H1 (cell line): ENCODE measurements at regions of chr1 and their contacts with region 1.

Region 1: GRCh38 chr1:162976628-162977027 is 92.5 kb upstream of the RGS4 start:
- DNase-seq: no peak
- H3K4me3 ChIP-seq: no peak overlapping the region
- H3K27ac ChIP-seq: no peak overlapping the region
- H3K4me1 ChIP-seq: no peaks in the 10 kb centered on the region
- H3K27me3 ChIP-seq: no peaks in the 10 kb centered on the region
- CTCF ChIP-seq: no peak
- EP300 ChIP-seq: no peak
- POLR2A ChIP-seq: no peak
- RAD21 ChIP-seq: no peak

Region 2: GRCh38 chr1:162942916-162943567 is 33.6 kb before region 1 on chr1:
- CTCF ChIA-PET with region 1: no interaction called
- POLR2A ChIA-PET with region 1: no interaction called
- DNase-seq: no peak
- H3K4me3 ChIP-seq: no peak overlapping the region
- H3K27ac ChIP-seq: no peak overlapping the region
- H3K4me1 ChIP-seq: peaks cover 0 to 3% (median 1%) of the 10 kb centered on the region in 4 experiments; a peak in 2 of 7 replicates
- H3K27me3 ChIP-seq: no peaks in the 10 kb centered on the region
- CTCF ChIP-seq: no peak
- EP300 ChIP-seq: no peak
- POLR2A ChIP-seq: no peak
- RAD21 ChIP-seq: no peak

Region 3: DNA sequence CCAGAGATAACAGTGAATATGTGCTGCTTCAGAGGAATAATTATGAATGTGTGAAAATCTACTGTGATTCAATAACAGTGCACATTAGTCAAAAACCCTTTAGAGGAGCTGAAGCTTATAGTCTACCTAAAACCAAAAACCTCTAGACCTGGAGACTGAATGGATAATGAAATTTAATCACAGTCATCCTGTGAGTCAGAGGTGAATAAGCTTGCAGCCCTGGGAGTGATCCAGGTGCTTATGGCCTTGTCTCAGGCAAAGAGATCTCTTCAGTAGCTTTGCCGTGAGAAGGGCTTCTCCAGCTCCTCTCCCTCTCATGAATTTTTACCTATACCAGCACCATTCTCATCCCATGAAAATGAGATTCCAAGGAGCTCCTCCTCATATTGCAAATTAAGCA is 11.2 kb after region 1 on chr1:
- CTCF ChIA-PET with region 1: interaction called, 11 read pairs
- POLR2A ChIA-PET with region 1: no interaction called
- DNase-seq: no peak
- H3K4me3 ChIP-seq: no peak overlapping the region
- H3K27ac ChIP-seq: no peak overlapping the region
- H3K4me1 ChIP-seq: 0 out of 7 replicates have a peak, but pooled peaks cover 0 to 2% (median 0%) of the 10 kb centered on the region in 4 experiments
- H3K27me3 ChIP-seq: no peaks in the 10 kb centered on the region
- CTCF ChIP-seq: no peak
- EP300 ChIP-seq: no peak
- POLR2A ChIP-seq: no peak
- RAD21 ChIP-seq: no peak